Breast epithelium (tissue), 4 donors: ENCODE measurements at regions of chr11 and their contacts with region 1.

Region 1: DNA sequence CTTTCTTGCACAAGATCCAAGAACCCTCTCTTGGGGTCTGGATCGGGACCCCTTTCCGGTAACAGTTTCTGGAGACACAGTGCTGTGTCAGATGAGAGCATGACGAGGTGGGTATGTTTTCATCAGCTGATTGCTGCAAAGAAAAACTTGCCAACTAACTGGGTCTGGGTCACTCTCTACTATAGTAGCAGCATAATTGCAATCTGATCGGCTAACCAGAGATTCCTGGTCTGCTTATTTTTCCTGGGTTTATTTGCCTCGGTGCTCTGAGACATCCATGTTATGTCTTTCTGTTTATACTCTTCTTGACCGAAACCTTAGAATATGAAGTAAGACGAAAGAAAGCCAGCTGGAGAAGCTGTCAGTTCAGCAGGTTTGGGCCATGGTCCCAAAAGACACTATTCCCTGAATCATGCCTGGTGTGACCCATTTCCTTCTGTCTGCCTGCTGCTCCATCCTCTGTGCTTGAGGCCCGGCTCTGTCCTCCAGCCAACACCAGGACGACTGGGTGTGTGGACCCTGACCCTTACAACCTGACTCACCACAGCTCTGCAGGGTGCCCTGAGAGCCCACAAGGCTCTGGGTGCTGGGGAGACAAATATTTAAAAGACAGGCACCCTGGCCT is 24.1 kb upstream of the CLMP start:
- DNase-seq: no peak
- H3K4me3 ChIP-seq: no peak overlapping the region
- H3K27ac ChIP-seq: no peak overlapping the region
- H3K4me1 ChIP-seq: no peaks in the 10 kb centered on the region
- H3K27me3 ChIP-seq: no peaks in the 10 kb centered on the region
- CTCF ChIP-seq: no peak
- POLR2A ChIP-seq: no peak

Region 2: DNA sequence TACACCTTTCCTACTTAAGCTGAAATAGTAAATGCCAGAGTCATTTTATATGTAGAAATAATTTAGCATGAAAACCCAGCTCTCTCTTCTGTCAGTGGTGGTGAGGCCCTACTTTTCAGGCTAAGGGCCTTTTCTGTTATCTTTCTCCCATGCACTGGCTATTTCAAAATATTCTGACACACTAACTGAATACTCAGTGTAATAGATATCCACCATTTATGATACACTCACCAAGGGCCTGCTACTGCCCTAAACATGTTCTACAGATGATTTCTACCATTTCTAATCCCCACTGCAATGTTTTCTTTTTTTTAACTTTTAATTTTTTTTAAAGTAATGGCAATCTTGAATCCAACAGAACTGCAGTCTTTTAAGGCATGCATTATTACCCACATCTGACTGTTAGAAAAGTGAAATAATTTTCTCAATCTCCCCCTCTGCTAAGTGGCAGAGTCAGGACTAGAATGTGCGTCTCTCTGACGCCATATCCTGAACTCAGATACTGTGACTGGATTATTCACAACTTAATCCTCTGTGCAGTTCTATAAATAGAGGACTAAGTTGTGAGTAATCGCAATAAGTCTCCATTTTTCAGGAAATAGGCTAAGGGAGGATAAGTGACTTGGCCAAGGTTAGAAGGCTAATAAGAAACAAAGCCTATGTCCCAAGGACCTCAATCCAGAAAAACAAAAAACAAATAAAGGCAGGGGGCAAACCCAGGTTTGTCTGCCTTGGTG is 254.9 kb after region 1 on chr11:
- intact Hi-C with region 1: loop called (anchors 5 kb)
- DNase-seq: no peak
- H3K4me3 ChIP-seq: no peak overlapping the region
- H3K27ac ChIP-seq: no peak overlapping the region
- H3K4me1 ChIP-seq: no peaks in the 10 kb centered on the region
- H3K27me3 ChIP-seq: no peaks in the 10 kb centered on the region
- CTCF ChIP-seq: no peak
- POLR2A ChIP-seq: no peak